ENCODE measurements at regions of chr14 and their contacts with region 1.

Region 1: GRCh38 chr14:78598041-78598920 is 428.1 kb downstream of the NRXN3 start:
- DNase-seq: no peak
- H3K4me3 ChIP-seq: no peak overlapping the region
- CTCF ChIP-seq: peak; percentile 94

Region 2: DNA sequence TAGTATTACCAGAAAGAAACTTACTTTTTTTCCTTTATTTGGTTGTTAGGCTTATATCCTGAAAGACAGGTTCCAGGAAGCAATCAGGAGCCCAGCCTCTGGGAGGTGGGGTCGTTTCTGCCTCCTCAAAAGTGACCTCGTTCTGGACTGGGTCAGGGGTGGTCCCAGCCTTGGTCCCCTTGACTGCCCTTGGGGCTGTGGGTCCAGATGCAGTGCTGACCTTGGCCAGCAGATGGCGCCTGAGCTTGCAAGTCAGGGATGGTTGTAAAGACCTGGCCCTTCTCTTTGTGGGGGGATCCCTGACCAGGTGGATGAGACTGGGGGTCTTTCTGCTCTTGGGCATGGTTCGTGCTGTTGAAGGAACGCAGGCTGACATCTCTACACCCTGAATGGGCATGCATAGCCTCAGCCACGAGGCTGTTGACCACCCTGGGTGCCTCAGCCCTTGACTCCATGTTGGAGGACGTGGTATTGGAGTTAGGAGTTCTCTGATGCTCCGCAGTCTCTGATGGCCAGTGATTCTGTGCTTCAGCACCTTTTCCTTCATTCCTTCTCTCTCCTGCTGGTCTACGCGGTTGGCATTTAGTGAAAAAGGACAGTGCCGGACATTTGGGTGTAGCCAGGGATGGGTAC is 736.0 kb before region 1 on chr14:
- CTCF ChIA-PET with region 1: interaction called, 25 read pairs
- POLR2A ChIA-PET with region 1: no interaction called
- DNase-seq: no peak
- H3K4me3 ChIP-seq: no peak overlapping the region
- CTCF ChIP-seq: peak; percentile 98

Region 3: DNA sequence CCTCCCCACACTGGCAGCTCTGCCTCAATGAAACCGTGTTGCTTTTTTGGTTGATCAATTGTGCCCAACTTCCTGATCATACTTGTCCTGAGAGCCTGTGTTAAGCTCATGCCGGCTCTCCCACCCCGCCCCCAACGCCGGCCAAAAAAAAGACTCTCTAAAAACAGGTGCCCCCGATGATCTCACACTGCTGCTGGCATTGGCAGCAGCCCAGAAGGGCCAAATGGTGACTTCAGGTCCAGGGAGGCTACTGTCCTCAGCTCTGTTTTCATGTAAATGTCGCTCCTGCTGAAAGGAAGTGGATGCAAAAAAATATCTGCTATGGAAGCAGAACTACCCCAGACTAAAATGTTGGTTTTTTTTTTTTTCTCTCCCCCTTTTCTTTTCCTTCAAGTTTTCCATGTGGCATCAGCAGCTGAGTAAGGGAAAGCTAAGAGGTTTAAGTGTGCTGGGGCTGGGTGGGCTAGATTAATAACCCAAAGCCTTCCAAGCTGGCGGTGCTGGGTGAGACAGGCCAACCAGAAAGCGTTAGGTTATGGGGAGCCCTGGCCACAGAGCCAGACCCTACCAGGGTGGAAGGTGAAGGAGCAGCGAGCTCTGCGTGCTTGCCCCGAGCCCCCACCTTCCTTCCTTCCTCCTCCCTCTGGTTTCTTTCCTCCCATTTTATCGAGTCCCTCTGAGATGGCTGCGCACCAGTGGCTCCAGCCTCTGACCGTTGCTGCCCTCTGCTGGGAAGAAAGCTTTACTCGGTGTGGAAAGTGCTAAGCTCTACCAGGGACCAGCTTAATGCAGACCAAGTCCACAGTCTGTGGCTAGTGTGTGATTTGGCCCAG is 32.0 kb before region 1 on chr14:
- CTCF ChIA-PET with region 1: interaction called, 15 read pairs
- POLR2A ChIA-PET with region 1: no interaction called
- DNase-seq: peak; percentile 10
- H3K4me3 ChIP-seq: peak overlapping the region; percentile 44
- CTCF ChIP-seq: peak; percentile 84

Region 4: DNA sequence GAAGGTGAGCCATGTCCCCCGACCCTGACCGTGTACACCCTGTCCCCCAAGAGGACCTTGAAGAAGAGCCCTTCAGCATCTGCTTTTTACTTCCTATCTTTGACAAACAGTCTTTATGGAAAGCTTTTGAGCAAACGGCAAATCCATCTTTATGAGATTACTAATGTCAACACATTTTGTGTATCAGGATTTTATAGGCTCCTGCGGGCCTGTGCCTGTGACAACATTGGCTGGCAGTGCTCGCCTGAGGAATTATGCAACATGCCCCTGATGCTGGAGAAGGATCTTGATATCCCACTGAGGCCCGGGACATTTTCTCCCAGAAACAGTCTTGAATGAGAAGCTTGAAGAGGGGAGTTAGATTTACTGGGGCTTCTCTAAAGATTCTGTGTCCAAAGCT is 11.6 kb before region 1 on chr14:
- CTCF ChIA-PET with region 1: interaction called, 63 read pairs
- POLR2A ChIA-PET with region 1: no interaction called
- DNase-seq: no peak
- H3K4me3 ChIP-seq: no peak overlapping the region
- CTCF ChIP-seq: no peak

Region 5: DNA sequence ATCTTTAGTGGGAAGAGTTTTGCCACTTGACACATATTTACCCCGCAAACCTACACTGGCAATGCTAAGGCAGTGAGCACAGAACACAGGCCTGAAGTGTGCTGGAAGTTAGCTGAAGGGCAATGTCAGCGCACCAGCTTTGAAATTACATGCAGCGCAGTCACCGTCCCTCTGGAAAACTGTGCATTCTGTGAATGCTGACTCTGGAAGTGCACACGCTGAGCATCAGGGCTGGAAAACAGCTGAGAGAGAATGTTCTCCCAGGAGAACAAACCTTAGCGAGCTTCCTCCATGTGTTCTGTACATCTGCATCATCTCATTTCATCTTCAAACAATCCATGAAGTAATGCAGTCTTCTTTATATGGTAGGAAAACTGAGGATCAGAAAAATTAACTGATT is 20.1 kb after region 1 on chr14:
- CTCF ChIA-PET with region 1: interaction called, 11 read pairs
- POLR2A ChIA-PET with region 1: no interaction called
- DNase-seq: no peak
- H3K4me3 ChIP-seq: no peak overlapping the region
- CTCF ChIP-seq: no peak

Region 6: DNA sequence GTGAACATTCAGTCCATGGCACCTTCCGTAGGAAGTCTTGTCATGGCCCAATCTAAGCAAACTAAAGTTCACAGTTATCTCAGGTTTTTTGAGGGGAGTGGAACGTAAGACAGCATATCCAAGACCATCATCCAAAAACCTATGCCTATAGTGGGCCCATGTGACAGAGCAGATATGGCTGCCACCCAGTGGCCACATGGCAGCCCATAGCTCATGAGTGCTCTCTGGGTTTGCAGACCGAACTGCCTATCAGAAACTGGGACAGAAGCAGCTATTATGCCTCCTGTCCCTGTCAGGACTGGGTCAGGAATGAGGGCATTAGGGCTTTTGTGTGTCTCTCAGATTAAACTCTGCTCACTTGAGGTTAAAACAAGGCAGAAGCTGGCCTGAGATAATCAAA is 75.6 kb after region 1 on chr14:
- CTCF ChIA-PET with region 1: no interaction called
- POLR2A ChIA-PET with region 1: no interaction called
- DNase-seq: no peak
- H3K4me3 ChIP-seq: no peak overlapping the region
- CTCF ChIP-seq: no peak

Region 7: DNA sequence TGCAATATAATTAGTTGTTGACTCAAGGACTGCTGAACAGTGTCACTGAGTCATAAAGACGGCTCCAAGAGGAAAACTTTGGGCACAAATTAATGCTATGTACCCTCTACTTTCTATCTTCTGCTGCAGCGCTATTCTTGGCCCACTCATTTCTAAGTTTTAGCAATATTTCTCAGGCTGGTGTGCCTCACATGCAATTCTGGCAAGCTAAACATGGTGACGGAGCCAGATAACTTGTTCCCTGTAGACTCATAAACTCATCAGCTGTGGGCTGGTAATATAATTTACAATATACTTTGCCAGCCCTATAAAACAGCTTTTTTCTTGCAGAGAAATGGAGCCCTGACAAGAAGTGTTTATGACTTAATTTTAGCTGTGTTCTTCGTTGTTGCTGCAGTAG is 187.0 kb after region 1 on chr14:
- CTCF ChIA-PET with region 1: no interaction called
- POLR2A ChIA-PET with region 1: no interaction called
- DNase-seq: no peak
- H3K4me3 ChIP-seq: no peak overlapping the region
- CTCF ChIP-seq: no peak

Region 8: DNA sequence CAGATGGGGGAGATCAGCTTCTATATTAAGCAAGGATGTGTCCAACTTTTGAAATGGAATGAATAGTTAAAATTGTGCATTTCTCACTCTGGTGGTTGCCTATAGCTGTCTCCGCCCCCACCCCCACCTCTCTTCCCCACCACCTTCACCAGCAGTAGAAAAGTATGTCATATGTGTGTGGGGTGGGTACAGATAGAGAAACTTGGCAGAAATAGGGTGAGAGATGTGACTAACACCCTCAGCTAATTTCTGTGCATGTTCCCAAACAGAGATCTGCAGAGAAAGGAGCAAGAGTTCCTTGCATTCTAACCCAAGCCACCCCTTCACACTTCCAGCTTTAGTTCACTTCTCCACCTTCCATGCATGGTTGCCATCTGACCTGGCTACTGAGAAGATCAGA is 551.9 kb after region 1 on chr14:
- CTCF ChIA-PET with region 1: no interaction called
- POLR2A ChIA-PET with region 1: no interaction called
- DNase-seq: no peak
- H3K4me3 ChIP-seq: no peak overlapping the region
- CTCF ChIP-seq: no peak